ENCODE measurements at regions of chr9 and their contacts with region 1.

Region 1: GRCh38 chr9:75071530-75072124 is 16.3 kb downstream of the NMRK1 start:
- DNase-seq: peak; percentile 26
- H3K4me3 Mint-ChIP-seq: no peak overlapping the region
- H3K27ac Mint-ChIP-seq: peak overlapping the region; percentile 79
- H3K4me1 Mint-ChIP-seq: peaks cover 35% of the 10 kb centered on the region
- H3K27me3 Mint-ChIP-seq: no peaks in the 10 kb centered on the region

Region 2: GRCh38 chr9:74887041-74887980 is 184.3 kb before region 1 on chr9 and contains the start of gene TRPM6:
- intact Hi-C with region 1: loop called (anchors 10 kb)
- DNase-seq: peak; percentile 33
- H3K4me3 Mint-ChIP-seq: peak within 1 kb of the TSS; percentile 89
- H3K27ac Mint-ChIP-seq: peak within 1 kb of the TSS; percentile 9
- H3K4me1 Mint-ChIP-seq: peaks cover 22% of the 10 kb centered on the region
- H3K27me3 Mint-ChIP-seq: peaks cover 36% of the 10 kb centered on the region
- total RNA-seq, gene TRPM6: 0.02 and 0.05 TPM in 2 replicates

Region 3: GRCh38 chr9:74952281-74953151 is 119.1 kb before region 1 on chr9 and contains the start of gene C9orf40:
- intact Hi-C with region 1: loop called (anchors 2 kb)
- DNase-seq: peak; percentile 86
- H3K4me3 Mint-ChIP-seq: peak within 1 kb of the TSS; percentile 98
- H3K27ac Mint-ChIP-seq: peak within 1 kb of the TSS; percentile 99
- H3K4me1 Mint-ChIP-seq: peaks cover 44% of the 10 kb centered on the region
- H3K27me3 Mint-ChIP-seq: no peaks in the 10 kb centered on the region
- total RNA-seq, gene C9orf40: 18.1 and 18.3 TPM in 2 replicates

Region 4: DNA sequence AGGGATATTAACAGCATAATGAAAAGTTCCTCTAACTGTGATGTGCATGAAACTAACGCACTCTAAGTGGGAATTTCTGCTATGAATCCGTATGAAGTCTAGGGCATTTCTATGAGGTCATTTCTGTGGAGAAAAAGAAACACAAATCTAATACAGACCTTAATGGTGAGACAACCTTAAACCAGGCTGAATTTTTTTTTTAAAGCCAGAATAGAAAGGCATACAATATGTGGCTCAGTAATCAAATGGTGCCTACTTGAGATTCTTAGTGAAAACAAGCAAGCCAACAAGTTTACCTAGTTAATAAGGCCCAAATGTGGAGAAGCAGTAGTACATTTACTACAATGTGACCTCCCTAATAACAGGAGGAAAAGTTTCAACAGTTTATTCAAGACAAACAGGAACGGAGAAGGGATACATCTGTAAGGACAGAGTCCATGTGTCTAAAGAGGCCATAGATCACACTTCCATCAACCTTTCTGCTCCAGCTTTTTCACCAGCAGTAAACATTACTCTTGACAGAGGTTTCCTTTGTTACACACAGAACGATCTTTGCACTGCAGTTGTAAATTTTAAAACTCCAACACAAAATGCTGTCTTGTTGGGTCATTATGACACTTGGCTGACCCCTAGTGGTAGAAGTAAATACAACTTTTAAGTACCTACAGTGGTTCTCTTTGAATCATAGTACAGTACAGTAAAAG is 69.8 kb before region 1 on chr9:
- intact Hi-C with region 1: loop called (anchors 2 kb)
- DNase-seq: no peak
- H3K4me3 Mint-ChIP-seq: no peak overlapping the region
- H3K27ac Mint-ChIP-seq: no peak overlapping the region
- H3K4me1 Mint-ChIP-seq: no peaks in the 10 kb centered on the region
- H3K27me3 Mint-ChIP-seq: no peaks in the 10 kb centered on the region